Activated T-helper 2 cell treated with anti-CD3 and anti-CD28 coated beads, Interferon-gamma antibody, Interleukin-2, Interleukin-4, amounts not matched to agents 10 μg/mL and 5 μg/mL and 100 μg/mL, durations not matched to agents 14 hours and 24 hours and 36 hours (primary cell): ENCODE measurements at regions of chr1 and their contacts with region 1.

Region 1: DNA sequence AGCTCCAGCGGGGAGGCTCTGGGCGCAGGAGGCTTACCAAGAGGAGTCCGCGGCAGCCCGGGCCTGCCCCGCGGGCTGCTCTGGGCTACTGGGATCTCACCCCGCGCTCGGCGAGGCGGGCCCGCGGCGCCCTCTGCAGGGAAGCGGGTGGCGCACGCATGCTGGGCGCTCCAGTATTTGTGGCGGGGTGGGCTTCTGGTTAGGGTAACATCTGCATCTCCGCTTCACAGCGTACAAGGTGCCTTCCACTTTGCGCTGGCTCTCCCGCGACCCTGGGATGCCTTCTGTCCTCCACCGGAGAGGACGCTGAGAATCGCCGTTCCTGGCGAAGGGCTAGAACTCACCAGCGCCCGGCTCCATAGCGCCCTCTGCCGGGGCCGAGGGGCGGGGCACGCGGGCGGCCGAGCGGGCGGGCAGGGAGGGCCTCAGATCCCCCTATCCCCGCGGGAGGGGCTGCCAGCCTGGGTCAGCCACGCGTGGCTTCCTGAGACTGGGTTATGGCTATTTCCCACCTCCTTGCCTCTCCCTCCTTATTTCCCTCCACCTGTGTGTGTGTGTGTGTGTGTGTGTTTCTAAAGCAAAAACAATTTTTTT is 46.6 kb upstream of the CTBS start:
- DNase-seq: peak; percentile 77
- H3K4me3 Mint-ChIP-seq: peak overlapping the region; percentile 89
- H3K27ac Mint-ChIP-seq: peak overlapping the region; percentile 88
- H3K4me1 Mint-ChIP-seq: peaks cover 23% of the 10 kb centered on the region
- H3K27me3 Mint-ChIP-seq: peaks cover under 1% of the 10 kb centered on the region

Region 2: DNA sequence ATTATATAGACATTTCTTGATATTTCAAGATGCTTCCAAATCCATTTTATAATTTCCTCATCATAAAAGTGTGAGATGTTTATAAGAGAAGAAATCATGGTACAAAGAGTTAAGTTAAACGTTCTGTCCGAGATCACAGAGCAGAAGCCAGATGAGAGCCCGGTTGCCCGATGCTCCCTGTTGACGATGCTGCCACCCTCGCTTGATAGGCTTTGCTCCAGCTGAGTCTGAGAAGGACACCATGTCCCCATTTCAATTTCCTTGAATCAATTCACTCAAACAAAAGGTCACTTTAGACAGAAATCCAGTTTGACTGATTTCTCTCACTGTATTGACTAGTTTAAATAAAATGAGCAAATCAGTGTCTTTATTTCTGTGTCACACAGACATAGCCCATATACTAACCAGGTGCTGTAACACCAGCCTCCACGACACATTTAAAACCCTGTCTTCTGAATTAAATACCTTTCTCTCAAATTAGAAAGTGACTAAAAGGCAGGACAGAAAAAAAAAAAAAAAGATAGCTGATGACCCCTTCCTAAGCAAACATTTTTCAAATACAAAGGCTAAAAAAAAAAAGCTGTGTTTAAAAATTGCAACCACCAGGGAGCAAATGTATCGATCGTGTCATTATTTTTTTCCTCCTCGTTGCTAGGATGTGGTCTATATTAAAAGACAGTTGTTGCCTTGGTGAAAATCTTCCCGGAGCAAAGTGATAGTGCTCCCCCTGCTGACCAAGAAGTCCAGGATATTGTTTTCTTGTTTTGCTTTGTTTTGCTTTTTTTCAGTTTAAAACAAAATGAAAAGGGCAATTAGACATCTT is 187.3 kb before region 1 on chr1:
- intact Hi-C with region 1: loop called (anchors 1 kb)
- DNase-seq: peak; percentile 54
- H3K4me3 Mint-ChIP-seq: peak overlapping the region; percentile 18
- H3K27ac Mint-ChIP-seq: no peak overlapping the region
- H3K4me1 Mint-ChIP-seq: peaks cover 3% of the 10 kb centered on the region
- H3K27me3 Mint-ChIP-seq: no peaks in the 10 kb centered on the region

Region 3: DNA sequence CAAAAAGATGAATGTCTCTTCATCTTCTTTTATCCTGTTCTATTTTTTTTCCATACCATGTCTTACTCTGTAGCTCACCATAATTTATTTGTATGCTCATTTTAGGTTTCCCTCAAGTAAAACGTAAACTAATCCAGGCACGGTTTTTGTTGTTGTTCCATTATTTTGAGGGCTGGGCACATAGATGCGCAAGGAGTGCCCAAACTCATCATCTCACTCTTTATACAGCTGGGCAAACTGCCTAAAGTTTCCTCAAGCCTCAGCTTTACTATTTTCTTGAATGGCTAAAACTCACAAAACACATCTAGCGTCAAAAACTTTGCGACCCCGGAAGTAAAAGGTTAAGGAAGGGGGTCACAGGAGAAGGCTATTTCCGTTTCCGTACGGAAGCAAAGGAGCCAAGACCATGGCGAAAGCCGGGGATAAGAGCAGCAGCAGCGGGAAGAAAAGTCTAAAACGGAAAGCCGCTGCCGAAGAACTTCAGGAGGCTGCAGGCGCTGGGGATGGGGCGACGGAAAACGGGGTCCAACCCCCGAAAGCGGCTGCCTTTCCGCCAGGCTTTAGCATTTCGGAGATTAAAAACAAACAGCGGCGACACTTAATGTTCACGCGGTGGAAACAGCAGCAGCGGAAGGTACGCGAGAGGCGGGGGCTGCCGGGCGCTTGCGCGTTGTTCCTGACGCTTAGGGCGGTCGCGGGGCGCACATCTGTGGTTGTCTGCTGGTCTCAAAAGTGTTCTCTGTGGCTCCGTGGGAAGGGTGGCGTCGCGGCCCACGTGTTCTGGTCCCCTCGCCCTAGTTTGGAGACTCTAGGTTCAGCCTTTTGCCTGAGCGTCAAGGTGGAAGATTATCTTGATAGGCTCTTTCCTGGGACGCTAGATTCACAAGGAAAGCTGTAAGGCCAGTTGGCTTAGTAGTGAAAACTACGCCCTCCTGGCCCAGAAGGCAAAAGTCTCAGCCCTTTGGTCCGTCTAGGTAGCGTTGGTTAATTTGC is 141.6 kb before region 1 on chr1 and contains the start of gene RPF1:
- intact Hi-C with region 1: loop called (anchors 1 kb)
- DNase-seq: peak; percentile 71
- H3K4me3 Mint-ChIP-seq: peak within 1 kb of the TSS; percentile 99
- H3K27ac Mint-ChIP-seq: peak within 1 kb of the TSS; percentile 99
- H3K4me1 Mint-ChIP-seq: peaks cover 26% of the 10 kb centered on the region
- H3K27me3 Mint-ChIP-seq: peaks cover 26% of the 10 kb centered on the region
- total RNA-seq, gene RPF1: 58.9 and 62.7 TPM in 2 replicates

Region 4: GRCh38 chr1:84492726-84493125 is 128.1 kb before region 1 on chr1:
- intact Hi-C with region 1: no loop called
- DNase-seq: no peak
- H3K4me3 Mint-ChIP-seq: no peak overlapping the region
- H3K27ac Mint-ChIP-seq: no peak overlapping the region
- H3K4me1 Mint-ChIP-seq: peaks cover 3% of the 10 kb centered on the region
- H3K27me3 Mint-ChIP-seq: no peaks in the 10 kb centered on the region

Region 5: DNA sequence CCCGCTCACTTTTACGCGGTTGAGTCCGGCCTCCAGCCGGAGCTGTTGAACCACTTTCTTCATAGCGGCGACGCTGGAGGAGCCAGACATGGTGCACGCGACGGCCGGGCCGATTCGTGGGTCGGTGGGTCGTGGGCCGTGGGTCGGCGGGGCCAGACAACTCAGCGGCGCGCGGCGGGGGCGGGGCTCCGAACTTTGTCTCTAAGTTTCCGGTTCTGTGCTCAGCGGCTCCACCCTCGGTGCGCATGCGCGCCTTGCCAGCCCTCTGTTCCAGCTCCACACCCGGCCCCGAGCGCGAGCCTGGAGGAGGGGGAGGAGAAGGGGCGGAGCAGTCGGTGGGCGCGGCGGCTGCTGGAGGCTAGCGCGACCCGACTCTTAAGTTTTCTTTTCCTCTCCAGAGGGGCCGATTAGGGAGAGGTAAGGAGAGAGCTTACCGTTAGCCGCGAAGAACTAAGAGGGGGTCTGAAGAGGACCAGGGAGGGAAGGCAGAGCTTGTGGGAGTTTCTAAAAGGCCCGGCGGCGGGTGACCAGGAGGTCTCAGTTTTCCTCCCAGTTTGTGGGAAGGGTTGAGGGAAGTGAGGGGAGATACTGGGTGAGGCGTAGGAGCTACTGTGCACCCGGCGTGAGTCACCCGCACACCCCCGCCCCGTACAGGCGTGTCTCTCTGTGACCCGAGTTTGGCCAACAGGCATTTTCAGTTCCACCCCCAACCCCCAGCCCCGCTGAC is 114.7 kb before region 1 on chr1 and contains the starts of genes GNG5 and SPATA1:
- intact Hi-C with region 1: loop called (anchors 1 kb)
- DNase-seq: peak; percentile 97
- H3K4me3 Mint-ChIP-seq: peak within 1 kb of the TSS; percentile 100
- H3K27ac Mint-ChIP-seq: peak within 1 kb of the TSS; percentile 99
- H3K4me1 Mint-ChIP-seq: peaks cover 26% of the 10 kb centered on the region
- H3K27me3 Mint-ChIP-seq: no peaks in the 10 kb centered on the region
- total RNA-seq, gene GNG5: 118 and 126 TPM in 2 replicates
- total RNA-seq, gene SPATA1: 1.4 and 1.5 TPM in 2 replicates

Region 6: GRCh38 chr1:84598846-84599741 is 21.7 kb before region 1 on chr1:
- intact Hi-C with region 1: loop called (anchors 1 kb)
- DNase-seq: no peak
- H3K4me3 Mint-ChIP-seq: no peak overlapping the region
- H3K27ac Mint-ChIP-seq: peak overlapping the region; percentile 80
- H3K4me1 Mint-ChIP-seq: peaks cover 25% of the 10 kb centered on the region
- H3K27me3 Mint-ChIP-seq: no peaks in the 10 kb centered on the region

Region 7: GRCh38 chr1:84690397-84691121 is 69.7 kb after region 1 on chr1 and contains the start of gene SSX2IP:
- intact Hi-C with region 1: loop called (anchors 2 kb)
- DNase-seq: peak; percentile 98
- H3K4me3 Mint-ChIP-seq: peak within 1 kb of the TSS; percentile 94
- H3K27ac Mint-ChIP-seq: peak within 1 kb of the TSS; percentile 94
- H3K4me1 Mint-ChIP-seq: peaks cover 46% of the 10 kb centered on the region
- H3K27me3 Mint-ChIP-seq: no peaks in the 10 kb centered on the region
- total RNA-seq, gene SSX2IP: 12.1 and 13.0 TPM in 2 replicates

Region 8: DNA sequence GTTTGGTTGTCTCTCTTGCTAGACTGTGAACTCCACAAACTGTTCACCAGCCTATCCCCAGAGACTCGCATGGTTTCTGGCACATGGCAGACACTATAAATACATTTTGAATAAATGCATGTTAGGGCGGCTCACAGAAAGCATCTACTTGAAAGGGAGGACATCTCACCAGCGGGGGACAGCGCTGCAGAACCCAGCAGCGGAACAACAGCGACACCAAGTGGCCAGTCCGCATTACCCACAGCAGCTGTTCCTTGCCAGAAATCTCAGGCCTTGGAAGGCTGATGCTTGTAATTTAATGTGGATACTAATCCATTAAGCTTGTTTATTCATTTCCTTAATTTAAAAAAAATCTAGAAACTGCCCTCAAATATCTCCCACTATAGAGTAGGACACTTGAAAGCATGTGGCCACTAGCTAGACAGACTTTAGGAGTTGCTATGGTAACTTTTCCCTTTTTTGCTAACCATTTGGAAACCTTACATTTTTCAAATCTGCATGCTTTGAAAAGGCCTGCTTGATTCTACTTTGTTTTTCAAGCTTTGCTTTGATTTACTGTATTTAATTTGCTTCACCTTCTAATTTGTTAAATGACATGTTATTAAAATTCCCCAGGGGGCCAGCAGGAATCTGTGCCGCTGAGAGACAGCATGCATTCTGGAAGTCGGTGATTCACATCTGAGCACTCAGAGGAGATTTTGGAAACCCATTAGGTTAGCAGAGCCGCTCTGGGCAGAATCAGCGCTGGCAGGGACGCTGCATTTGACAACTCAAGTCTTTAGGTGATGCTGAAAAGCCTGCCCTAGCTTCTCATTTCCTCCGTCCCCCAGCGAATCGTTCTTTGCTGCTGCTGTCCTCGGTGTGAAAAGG is 132.9 kb after region 1 on chr1:
- intact Hi-C with region 1: loop called (anchors 5 kb)
- DNase-seq: peak; percentile 64
- H3K4me3 Mint-ChIP-seq: no peak overlapping the region
- H3K27ac Mint-ChIP-seq: no peak overlapping the region
- H3K4me1 Mint-ChIP-seq: peaks cover 7% of the 10 kb centered on the region
- H3K27me3 Mint-ChIP-seq: peaks cover 8% of the 10 kb centered on the region